ENCODE measurements at regions of chrX and their contacts with region 1.

Region 1: DNA sequence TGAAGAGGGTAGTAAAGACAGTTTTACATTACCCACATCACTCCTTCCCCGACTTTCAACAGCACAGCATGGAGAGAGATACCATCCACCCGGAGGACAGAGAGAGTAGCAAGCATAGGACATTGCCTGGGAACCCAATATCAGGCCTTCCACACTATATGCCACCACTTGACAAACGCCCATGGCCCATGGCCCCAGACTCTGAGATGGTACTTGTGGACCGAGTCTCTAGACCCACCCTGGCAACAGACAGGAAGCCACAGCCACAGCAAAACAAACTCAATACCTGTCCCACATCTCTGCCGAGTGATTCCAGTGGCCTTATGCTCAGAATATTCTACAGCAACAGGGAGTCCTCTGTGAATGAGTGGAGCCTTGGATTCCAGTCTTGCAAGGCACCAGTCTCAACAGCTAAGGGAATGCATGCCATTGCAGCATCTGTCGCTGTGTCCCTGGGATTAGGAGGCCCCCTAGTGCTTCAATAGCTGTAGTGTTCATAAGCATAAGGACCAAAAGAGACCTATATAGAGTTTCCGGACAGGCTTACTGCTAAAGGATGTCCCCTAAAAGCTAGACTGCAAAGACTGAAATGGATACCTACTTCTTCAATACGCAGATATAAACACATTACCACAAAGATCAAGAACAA is 14.7 kb upstream of the CT55 start:
- DNase-seq: peak; percentile 42
- ATAC-seq: peak; percentile 36
- H3K4me3 ChIP-seq: no peak overlapping the region
- H3K4me3 Mint-ChIP-seq: no peak overlapping the region
- H3K27ac ChIP-seq: no peak overlapping the region
- H3K27ac Mint-ChIP-seq: no peak overlapping the region
- H3K4me1 ChIP-seq: no peaks in the 10 kb centered on the region
- H3K4me1 Mint-ChIP-seq: no peaks in the 10 kb centered on the region
- H3K27me3 ChIP-seq: peaks cover 0 to 4% (median 2%) of the 10 kb centered on the region in 4 experiments
- H3K27me3 Mint-ChIP-seq: peaks cover 19% of the 10 kb centered on the region
- CTCF ChIP-seq: peak; percentile 45

Region 2: GRCh38 chrX:135112096-135112729 is 73.7 kb before region 1 on chrX:
- CTCF ChIA-PET with region 1: interaction called, 13 read pairs
- POLR2A ChIA-PET with region 1: no interaction called
- intact Hi-C with region 1: loop called (anchors 2 kb)
- DNase-seq: peak; percentile 63
- ATAC-seq: peak; percentile 51
- H3K4me3 ChIP-seq: no peak overlapping the region
- H3K4me3 Mint-ChIP-seq: no peak overlapping the region
- H3K27ac ChIP-seq: no peak overlapping the region
- H3K27ac Mint-ChIP-seq: no peak overlapping the region
- H3K4me1 ChIP-seq: no peaks in the 10 kb centered on the region
- H3K4me1 Mint-ChIP-seq: peaks cover 7% of the 10 kb centered on the region
- H3K27me3 ChIP-seq: peaks cover 0 to 10% (median 3%) of the 10 kb centered on the region in 4 experiments
- H3K27me3 Mint-ChIP-seq: peaks cover 20% of the 10 kb centered on the region
- CTCF ChIP-seq: peak; percentile 70